Mucosa of descending colon (tissue), 3 donors: ENCODE measurements at regions of chr13 and their contacts with region 1.

Region 1: DNA sequence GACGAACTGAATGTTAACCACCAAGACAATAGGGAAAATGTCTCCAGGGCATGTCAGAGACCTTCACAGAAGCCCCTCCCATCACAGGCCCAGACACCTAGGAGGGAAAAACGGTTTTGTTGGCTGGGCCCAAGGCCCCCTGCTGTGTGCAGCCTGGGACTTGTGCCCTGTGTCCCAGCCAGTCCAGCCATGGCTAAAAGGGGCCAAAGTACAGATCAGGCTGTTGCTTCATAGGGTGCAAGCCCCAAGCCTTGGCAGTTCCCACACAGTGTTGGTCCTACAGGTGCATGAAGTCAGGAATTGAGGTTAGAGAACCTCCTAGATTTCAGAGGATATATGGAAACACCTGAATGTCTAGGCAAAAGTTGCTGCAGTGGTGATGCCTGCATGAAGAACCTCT is 428.7 kb downstream of the SUCLA2 start:
- DNase-seq: no peak
- ATAC-seq: no peak
- H3K4me3 ChIP-seq: no peak overlapping the region
- H3K4me1 ChIP-seq: no peaks in the 10 kb centered on the region
- CTCF ChIP-seq: no peak

Region 2: DNA sequence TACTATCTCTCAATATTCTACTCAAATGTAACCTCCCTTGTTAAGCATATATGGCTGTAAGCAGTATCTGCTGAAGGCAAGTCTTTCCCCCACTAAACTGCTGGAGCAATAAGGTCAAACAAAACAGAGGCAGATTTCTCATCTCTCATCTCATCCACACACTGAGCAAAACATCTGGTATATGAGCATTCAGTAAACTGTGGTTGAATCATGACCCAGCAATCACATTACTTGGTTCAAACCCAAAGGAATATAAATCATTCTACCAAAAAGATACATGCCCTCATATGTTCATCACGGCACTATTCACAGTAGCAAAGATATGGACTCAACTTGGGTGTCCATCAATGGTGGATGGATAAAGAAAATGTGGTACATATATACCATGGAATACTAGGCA is 84.3 kb after region 1 on chr13:
- intact Hi-C with region 1: loop called in 1 of 2 experiments (anchors 5 kb)
- DNase-seq: no peak
- ATAC-seq: no peak
- H3K4me3 ChIP-seq: no peak overlapping the region
- H3K4me1 ChIP-seq: no peaks in the 10 kb centered on the region
- CTCF ChIP-seq: no peak

Region 3: DNA sequence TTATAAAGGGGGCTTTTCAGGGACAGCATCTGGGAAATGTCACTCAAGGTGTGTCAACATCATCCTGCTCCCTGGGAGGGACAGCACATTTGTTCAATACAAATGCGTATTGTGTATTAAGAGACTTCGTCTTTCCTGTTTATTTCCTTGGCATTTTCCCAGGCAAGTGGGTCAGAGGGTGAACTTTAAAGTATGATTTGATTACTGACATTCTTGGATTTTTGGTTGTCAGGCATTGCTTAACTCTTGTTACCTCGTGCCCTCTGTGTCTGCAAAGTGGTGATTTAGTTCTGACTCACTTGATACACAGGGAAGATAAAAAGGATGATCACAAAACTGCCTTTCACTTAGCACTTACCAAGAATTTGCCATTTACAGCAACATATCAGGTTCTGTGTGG is 136.0 kb after region 1 on chr13:
- intact Hi-C with region 1: no loop called
- DNase-seq: no peak
- ATAC-seq: no peak
- H3K4me3 ChIP-seq: no peak overlapping the region
- H3K4me1 ChIP-seq: no peaks in the 10 kb centered on the region
- CTCF ChIP-seq: no peak

Region 4: DNA sequence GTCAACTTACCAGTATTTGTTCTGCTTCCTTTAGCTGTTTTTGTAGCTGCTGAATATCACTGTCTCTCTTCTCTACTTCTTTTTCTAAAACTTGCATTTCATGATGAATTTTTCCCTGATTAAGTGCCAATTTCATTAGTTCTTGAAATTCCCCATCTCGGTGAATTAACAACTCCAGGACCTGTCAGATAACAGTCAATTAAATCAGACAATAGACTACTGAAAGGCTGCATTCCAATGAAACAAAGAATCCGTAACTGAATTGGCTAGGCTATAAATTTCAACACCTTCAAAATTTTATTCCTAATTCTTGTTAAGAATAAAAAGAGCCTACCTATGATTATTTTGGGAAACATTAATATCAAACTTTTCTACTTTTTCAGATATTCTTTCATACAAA is 513.9 kb after region 1 on chr13:
- intact Hi-C with region 1: no loop called
- DNase-seq: no peak
- ATAC-seq: no peak
- H3K4me3 ChIP-seq: no peak overlapping the region
- H3K4me1 ChIP-seq: no peaks in the 10 kb centered on the region
- CTCF ChIP-seq: no peak